Lower lobe of right lung (tissue), 2 donors: ENCODE measurements at regions of chr17 and their contacts with region 1.

Region 1: GRCh38 chr17:77429919-77430752 is 289.4 kb downstream of the SEC14L1 start:
- DNase-seq: peak; percentile 84
- ATAC-seq: peak; percentile 71 to 82
- H3K4me3 ChIP-seq: no peak overlapping the region
- H3K27ac ChIP-seq: peak overlapping the region; percentile 53
- H3K4me1 ChIP-seq: peaks cover 94% of the 10 kb centered on the region
- H3K27me3 ChIP-seq: no peaks in the 10 kb centered on the region
- CTCF ChIP-seq: peak; percentile 79

Region 2: GRCh38 chr17:77489911-77490255 is 59.7 kb after region 1 on chr17:
- intact Hi-C with region 1: loop called (anchors 10 kb)
- DNase-seq: peak; percentile 53
- ATAC-seq: peak; percentile 40 to 41
- H3K4me3 ChIP-seq: no peak overlapping the region
- H3K27ac ChIP-seq: no peak overlapping the region
- H3K4me1 ChIP-seq: peaks cover 25% of the 10 kb centered on the region
- H3K27me3 ChIP-seq: no peaks in the 10 kb centered on the region
- CTCF ChIP-seq: no peak